Activated T-helper 2 cell treated with anti-CD3 and anti-CD28 coated beads, Interferon-gamma antibody, Interleukin-2, Interleukin-4, amounts not matched to agents 10 μg/mL and 5 μg/mL and 100 μg/mL, durations not matched to agents 14 hours and 24 hours and 36 hours (primary cell): ENCODE measurements at regions of chr19 and their contacts with region 1.

Region 1: DNA sequence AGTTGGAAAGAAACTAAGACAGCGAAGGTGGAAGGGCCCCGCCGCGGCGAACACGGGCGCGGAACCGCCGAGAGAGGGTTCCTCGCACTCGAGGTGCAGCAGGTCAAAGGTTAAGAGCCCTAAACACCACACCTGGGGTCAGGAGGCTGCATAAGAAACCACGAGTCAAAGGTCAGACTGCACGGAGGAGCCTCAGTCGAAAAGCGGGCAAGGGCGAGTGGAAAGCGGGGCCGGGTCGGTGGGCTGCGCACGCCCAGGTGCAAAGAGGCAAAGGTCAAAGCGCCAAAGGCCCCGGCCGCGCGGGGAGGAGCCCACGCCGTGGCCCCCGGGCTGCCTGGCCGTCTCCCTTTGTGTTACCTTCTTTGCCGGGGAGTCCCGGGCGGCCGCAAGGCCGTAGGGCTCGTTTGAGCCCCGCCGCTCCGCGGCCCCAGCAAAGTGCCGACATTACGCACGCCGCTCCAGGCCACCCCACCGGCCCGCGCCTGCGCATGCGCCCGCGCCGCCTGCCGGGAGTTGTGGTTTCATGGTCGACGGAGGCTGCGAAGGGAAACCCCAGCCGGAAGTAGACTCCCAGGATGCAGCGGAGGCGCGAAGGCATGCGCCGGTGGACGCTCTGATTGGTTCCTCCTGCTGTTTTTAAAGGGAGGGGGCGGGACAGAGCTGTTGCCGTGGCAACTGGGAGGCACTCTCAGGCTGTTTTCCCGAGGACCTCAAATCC is at the start of gene POLRMT:
- DNase-seq: peak; percentile 95
- H3K4me3 Mint-ChIP-seq: peak within 1 kb of the TSS; percentile 97
- H3K27ac Mint-ChIP-seq: peak within 1 kb of the TSS; percentile 88
- H3K4me1 Mint-ChIP-seq: peaks cover 10% of the 10 kb centered on the region
- H3K27me3 Mint-ChIP-seq: no peaks in the 10 kb centered on the region
- total RNA-seq, gene POLRMT: 90.1 and 94.7 TPM in 2 replicates

Region 2: GRCh38 chr19:531009-531752 is 102.0 kb before region 1 on chr19:
- intact Hi-C with region 1: loop called (anchors 10 kb)
- DNase-seq: peak; percentile 90
- H3K4me3 Mint-ChIP-seq: peak overlapping the region; percentile 83
- H3K27ac Mint-ChIP-seq: peak overlapping the region; percentile 88
- H3K4me1 Mint-ChIP-seq: peaks cover 4% of the 10 kb centered on the region
- H3K27me3 Mint-ChIP-seq: peaks cover 1% of the 10 kb centered on the region

Region 3: DNA sequence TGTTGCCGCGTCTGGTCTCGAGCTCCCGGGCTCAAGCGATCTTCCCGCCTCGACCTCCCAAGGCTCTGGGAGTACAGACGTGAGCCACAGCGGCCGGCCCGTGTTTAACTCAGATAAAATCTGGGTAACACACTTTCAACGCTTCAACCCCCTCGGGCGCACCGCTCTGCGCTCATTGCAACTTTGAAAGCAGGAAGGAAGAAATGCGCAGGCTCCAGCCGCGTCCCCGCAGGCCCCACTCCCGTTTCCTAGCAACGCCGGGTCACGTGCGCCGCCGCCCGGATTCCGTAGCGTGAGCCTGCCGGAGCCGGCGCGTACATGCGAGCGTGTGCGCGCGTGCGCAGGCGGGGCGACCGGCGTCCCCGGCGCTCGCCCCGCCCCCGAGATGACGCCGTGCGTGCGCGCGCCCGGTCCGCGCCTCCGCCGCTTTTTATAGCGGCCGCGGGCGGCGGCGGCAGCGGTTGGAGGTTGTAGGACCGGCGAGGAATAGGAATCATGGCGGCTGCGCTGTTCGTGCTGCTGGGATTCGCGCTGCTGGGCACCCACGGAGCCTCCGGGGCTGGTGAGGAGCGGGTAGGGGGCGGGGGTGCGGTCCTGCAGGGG is 61.0 kb before region 1 on chr19 and contains the start of gene BSG:
- intact Hi-C with region 1: loop called (anchors 2 kb)
- DNase-seq: peak; percentile 99
- H3K4me3 Mint-ChIP-seq: peak within 1 kb of the TSS; percentile 86
- H3K27ac Mint-ChIP-seq: peak within 1 kb of the TSS; percentile 94
- H3K4me1 Mint-ChIP-seq: peaks cover 24% of the 10 kb centered on the region
- H3K27me3 Mint-ChIP-seq: no peaks in the 10 kb centered on the region
- total RNA-seq, gene BSG: 300 and 304 TPM in 2 replicates

Region 4: DNA sequence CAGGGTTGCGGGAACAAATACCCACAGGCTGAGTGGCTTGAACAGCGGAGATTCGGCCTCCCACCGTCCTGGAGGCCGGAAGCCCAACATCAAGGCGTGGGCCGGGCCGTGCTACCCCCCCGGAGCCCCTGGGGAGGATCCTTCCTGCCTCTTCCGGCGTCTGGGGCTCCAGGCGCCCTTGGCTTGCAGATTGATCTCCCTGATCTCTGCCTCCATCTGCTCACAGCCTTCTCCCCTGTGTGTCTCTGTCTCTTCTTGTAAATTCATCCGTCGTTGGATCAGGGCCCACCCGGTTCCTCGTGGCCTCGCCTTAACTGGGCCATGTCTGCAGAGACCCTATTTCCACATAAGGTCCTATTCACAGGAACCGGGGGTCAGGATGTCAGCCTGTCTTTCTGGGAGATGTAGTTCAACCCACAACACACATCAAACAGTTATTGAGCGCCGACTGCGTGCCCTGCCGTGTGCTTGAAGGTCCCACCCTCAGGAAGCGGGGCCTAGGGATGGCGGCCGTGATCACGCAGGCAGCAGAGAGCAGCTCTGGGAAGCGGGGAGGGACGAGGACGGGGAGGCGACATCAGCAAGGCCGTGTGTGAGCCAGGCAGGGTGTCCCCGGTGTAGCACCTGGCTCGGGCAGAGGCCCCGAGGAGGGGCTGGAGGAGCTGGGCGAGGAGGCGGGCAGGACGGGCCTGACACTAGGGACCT is 22.3 kb before region 1 on chr19:
- intact Hi-C with region 1: loop called (anchors 2 kb)
- DNase-seq: peak; percentile 63
- H3K4me3 Mint-ChIP-seq: peak overlapping the region; percentile 88
- H3K27ac Mint-ChIP-seq: peak overlapping the region; percentile 97
- H3K4me1 Mint-ChIP-seq: peaks cover 11% of the 10 kb centered on the region
- H3K27me3 Mint-ChIP-seq: no peaks in the 10 kb centered on the region

Region 5: DNA sequence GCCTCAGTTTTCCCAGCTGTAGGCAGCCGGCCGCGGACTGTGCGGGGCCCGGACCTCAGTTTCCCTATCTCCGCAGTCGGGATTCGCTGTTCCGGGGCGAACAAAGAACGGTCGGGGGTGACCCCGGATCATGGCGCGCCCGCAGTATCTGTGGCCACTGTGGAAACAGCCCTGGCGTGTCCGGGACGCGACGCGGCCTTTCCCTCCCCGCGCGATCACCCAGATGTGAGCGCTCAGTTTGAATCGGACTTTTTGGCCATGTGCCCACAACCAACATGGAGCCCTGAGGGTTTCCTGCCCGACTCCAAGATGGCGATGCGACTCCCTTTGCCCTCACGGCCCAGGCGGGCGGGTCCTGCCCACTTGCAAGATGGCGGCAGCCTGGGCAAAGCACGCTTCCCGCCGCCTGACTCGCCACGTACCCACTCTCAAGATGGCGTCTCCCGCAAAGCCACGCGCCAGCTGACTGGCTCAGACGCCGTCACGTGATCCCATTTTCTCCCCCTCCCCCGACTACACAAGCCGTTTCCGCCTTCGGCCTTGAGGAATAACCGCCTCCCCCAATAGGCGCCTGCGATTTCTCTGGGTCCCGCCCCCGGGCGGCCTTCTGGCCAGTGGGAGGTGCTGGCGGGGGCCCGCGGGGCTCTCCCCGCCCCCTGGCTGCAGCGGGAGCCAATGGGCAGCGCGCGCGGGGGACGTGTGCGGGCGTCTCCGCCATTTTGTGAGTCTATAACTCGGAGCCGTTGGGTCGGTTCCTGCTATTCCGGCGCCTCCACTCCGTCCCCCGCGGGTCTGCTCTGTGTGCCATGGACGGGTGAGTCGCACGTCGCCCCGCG is 163.7 kb after region 1 on chr19 and contains the start of gene PTBP1:
- intact Hi-C with region 1: loop called (anchors 1 kb)
- DNase-seq: peak; percentile 100
- H3K4me3 Mint-ChIP-seq: peak within 1 kb of the TSS; percentile 91
- H3K27ac Mint-ChIP-seq: peak within 1 kb of the TSS; percentile 93
- H3K4me1 Mint-ChIP-seq: peaks cover 20% of the 10 kb centered on the region
- H3K27me3 Mint-ChIP-seq: no peaks in the 10 kb centered on the region
- total RNA-seq, gene PTBP1: 735 and 739 TPM in 2 replicates

Region 6: DNA sequence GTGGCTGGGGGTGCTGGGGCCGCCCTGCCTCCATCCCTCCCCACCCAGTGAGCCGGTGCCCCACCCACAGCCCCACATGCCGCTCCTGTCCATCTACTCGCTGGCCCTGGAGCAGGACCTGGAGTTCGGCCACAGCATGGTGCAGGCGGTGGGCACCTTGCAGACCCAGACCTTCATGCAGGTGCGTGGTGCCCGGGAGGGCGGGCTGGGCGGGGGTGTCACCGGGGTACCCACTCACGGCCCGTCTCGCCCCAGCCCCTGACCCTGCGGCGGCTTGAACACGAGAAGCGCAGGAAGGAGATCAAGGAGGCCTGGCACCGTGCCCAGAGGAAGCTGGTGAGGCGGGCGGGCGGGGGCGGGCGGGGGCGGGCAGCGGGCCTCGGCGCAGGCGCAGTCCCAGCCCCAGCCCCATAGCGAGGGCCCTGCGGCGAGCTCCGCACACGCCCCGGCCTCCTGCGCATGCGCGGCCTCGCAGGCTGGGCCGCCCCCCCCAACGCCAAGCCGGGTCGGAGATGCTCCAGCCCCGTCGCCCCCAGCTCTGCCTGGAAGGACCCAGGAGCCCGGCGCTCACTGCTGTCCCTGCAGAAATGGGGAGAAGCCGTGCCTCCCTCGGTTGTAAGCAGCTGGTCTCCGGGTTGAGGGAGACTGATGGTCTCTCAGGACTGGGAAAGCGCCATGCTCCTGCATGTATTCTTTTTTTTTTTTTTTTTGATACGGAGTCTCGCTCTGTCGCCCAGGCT is 441.5 kb after region 1 on chr19:
- intact Hi-C with region 1: loop called (anchors 5 kb)
- DNase-seq: peak; percentile 76
- H3K4me3 Mint-ChIP-seq: peak overlapping the region; percentile 72
- H3K27ac Mint-ChIP-seq: peak overlapping the region; percentile 91
- H3K4me1 Mint-ChIP-seq: peaks cover 40% of the 10 kb centered on the region
- H3K27me3 Mint-ChIP-seq: no peaks in the 10 kb centered on the region